B cell (primary cell): ENCODE measurements at regions of chr10 and their contacts with region 1.

Region 1: DNA sequence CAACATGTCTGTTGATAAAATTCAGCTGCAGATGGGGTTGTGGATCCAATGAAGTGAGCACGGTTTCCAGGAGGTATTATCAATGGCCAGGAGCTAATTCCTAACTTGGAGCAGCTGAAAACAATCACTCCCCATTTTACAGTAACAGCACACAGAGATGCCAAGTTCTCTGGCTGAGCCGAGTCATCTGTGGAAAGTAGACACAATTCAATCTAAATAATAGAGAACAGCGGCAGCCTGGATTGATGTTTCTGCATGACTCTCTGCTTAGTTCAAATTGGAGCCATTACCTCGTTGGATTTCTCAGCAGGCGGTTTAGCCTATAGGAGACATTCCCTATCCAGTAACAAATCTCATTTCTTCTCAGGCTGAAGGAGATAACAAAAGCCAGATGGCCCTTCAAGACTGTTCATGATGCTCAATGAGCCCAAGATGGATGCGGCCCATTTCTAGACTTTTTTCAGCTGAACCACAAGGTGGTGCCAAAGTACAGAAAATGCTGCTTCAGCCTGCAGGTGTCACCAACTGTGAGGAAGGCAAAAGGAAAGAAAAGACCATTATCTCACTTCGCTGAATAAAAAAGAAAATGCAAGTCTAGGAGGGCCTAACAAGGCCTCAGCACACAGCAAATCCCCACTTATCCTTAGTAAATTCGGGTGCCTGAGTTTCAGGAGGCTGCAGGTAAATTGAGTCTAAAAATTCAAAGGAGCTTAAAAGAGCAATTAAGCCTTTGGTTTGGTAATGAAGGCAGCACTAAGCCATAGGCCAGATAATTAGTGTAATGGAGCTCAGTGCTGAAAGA is 83.7 kb downstream of the SLC16A9 start:
- DNase-seq: peak; percentile 78
- ATAC-seq: peak; percentile 89
- H3K4me3 ChIP-seq: no peak overlapping the region
- H3K4me3 Mint-ChIP-seq: no peak overlapping the region
- H3K27ac ChIP-seq: no peak overlapping the region
- H3K27ac Mint-ChIP-seq: no peak overlapping the region
- H3K4me1 ChIP-seq: no peaks in the 10 kb centered on the region
- H3K4me1 Mint-ChIP-seq: peaks cover 3% of the 10 kb centered on the region
- H3K27me3 ChIP-seq: no peaks in the 10 kb centered on the region
- H3K27me3 Mint-ChIP-seq: no peaks in the 10 kb centered on the region
- CTCF ChIP-seq: peak; percentile 87

Region 2: GRCh38 chr10:59808896-59809643 is 183.1 kb after region 1 on chr10:
- CTCF ChIA-PET with region 1: interaction called, 33 read pairs
- POLR2A ChIA-PET with region 1: no interaction called
- intact Hi-C with region 1: loop called (anchors 1 kb)
- DNase-seq: peak; percentile 60
- ATAC-seq: peak; percentile 65
- H3K4me3 ChIP-seq: no peak overlapping the region
- H3K4me3 Mint-ChIP-seq: no peak overlapping the region
- H3K27ac ChIP-seq: no peak overlapping the region
- H3K27ac Mint-ChIP-seq: peak overlapping the region; percentile 16
- H3K4me1 ChIP-seq: peaks cover 0 to 5% of the 10 kb centered on the region in 2 donors
- H3K4me1 Mint-ChIP-seq: peaks cover 20% of the 10 kb centered on the region
- H3K27me3 ChIP-seq: no peaks in the 10 kb centered on the region
- H3K27me3 Mint-ChIP-seq: no peaks in the 10 kb centered on the region
- CTCF ChIP-seq: peak; percentile 69

Region 3: GRCh38 chr10:60032723-60033122 is 406.8 kb after region 1 on chr10:
- CTCF ChIA-PET with region 1: interaction called, 47 read pairs
- POLR2A ChIA-PET with region 1: no interaction called
- intact Hi-C with region 1: loop called (anchors 1 kb)
- DNase-seq: peak; percentile 67
- ATAC-seq: peak; percentile 36
- H3K4me3 ChIP-seq: no peak overlapping the region
- H3K4me3 Mint-ChIP-seq: no peak overlapping the region
- H3K27ac ChIP-seq: no peak overlapping the region
- H3K27ac Mint-ChIP-seq: no peak overlapping the region
- H3K4me1 ChIP-seq: peaks cover 6 to 7% of the 10 kb centered on the region in 2 donors
- H3K4me1 Mint-ChIP-seq: peaks cover 10% of the 10 kb centered on the region
- H3K27me3 ChIP-seq: no peaks in the 10 kb centered on the region
- H3K27me3 Mint-ChIP-seq: no peaks in the 10 kb centered on the region
- CTCF ChIP-seq: peak; percentile 67

Region 4: DNA sequence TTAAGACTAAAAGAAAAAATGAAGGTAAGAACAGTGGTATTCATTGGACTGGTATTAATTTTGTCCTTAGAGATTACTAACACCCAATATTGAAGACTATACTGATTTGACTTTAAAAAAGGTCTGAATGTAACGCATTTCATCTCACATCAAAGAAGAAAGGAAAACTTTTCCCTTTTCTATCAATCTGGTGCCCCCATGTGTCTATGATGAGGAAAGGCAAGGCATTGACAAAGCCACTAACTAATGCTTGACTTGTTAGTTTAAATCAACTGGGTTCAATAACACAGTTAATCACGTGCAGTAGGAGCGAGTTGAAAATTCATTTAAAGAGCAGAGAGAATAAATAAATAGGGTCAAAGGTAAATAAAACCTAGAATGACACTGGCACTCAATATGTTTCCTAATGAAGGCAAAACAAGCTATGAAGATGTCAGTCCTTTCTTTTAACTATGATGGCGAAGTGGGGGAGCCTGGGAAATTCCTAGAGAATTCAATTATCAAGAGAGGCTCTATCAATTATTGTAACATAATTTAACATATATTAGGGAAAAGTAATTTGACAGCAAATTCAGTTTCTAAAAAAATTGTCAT is 582.9 kb after region 1 on chr10:
- CTCF ChIA-PET with region 1: interaction called, 14 read pairs
- POLR2A ChIA-PET with region 1: no interaction called
- intact Hi-C with region 1: no loop called
- DNase-seq: peak; percentile 36
- ATAC-seq: no peak
- H3K4me3 ChIP-seq: no peak overlapping the region
- H3K4me3 Mint-ChIP-seq: no peak overlapping the region
- H3K27ac ChIP-seq: no peak overlapping the region
- H3K27ac Mint-ChIP-seq: no peak overlapping the region
- H3K4me1 ChIP-seq: peaks cover 14 to 26% of the 10 kb centered on the region in 2 donors
- H3K4me1 Mint-ChIP-seq: peaks cover 37% of the 10 kb centered on the region
- H3K27me3 ChIP-seq: no peaks in the 10 kb centered on the region
- H3K27me3 Mint-ChIP-seq: no peaks in the 10 kb centered on the region
- CTCF ChIP-seq: peak; percentile 67

Region 5: DNA sequence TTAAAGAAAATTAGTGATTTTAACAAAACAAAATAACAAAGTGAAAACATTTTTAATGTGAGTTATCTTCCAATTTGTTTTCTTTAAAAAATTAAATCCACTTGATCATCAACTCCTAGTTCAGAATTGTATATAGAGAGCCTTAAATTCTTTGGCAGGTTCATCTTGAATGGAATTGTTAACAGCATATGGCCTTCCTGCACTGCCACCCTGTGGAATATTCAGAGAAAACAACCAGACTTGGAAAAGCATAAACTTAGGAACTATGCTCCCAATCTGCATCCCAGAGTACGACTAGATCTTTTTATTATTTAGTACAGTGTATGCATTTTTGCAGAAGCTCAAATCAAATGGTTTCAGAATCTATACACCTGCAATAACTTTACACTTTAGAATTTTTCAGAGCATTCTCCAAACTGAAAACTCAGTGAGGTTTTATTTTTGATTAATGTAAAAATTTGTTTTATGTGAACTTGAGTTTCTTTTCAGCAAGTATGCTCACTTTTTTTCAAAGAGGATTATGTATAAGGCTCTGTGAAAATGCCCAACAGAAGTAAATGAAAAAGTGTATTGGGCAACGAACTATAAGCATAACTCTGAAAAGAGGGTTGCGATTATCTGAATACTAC is 808.6 kb after region 1 on chr10:
- CTCF ChIA-PET with region 1: interaction called, 5 read pairs
- POLR2A ChIA-PET with region 1: no interaction called
- intact Hi-C with region 1: loop called (anchors 2 kb)
- DNase-seq: peak; percentile 61
- ATAC-seq: peak; percentile 56
- H3K4me3 ChIP-seq: no peak overlapping the region
- H3K4me3 Mint-ChIP-seq: no peak overlapping the region
- H3K27ac ChIP-seq: no peak overlapping the region
- H3K27ac Mint-ChIP-seq: no peak overlapping the region
- H3K4me1 ChIP-seq: no peaks in the 10 kb centered on the region
- H3K4me1 Mint-ChIP-seq: peaks cover 7% of the 10 kb centered on the region
- H3K27me3 ChIP-seq: no peaks in the 10 kb centered on the region
- H3K27me3 Mint-ChIP-seq: no peaks in the 10 kb centered on the region
- CTCF ChIP-seq: peak; percentile 77

Region 6: DNA sequence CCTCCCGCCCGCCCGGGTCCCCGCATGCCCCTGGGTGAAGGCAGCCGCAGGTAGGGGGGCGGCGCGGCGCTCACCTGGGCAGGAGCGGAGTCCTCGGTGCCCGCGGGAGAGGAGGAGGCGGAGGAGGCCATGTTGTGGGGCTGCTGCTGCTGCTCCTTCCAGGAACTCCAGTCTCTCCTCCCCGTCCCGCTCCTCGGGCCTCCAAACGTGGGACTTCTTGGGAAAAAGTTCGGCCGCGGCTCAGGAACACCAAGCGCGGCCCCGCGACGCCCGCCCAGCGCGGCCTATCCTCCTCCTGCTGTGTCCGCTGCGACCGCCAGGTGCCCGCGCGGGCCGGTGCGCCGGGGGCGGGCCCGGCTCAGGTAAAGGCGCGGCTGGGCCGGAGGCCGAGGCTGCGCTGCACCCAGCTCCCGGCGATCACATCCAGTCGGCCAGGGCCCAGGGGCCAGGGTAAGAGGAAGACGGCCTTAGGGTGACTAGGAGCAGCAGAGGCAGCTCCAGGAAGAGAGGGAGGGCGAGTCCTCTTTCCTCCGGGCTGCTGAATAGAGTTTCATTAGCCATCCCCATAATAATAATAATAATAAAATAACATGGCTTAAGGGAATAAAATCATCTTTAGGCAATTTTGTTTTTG is 1107.4 kb after region 1 on chr10:
- CTCF ChIA-PET with region 1: no interaction called
- POLR2A ChIA-PET with region 1: no interaction called
- intact Hi-C with region 1: loop called (anchors 1 kb)
- DNase-seq: peak; percentile 70
- ATAC-seq: peak; percentile 83
- H3K4me3 ChIP-seq: peak overlapping the region in 4 of 5 experiments; percentile 57 to 83 (median 71)
- H3K4me3 Mint-ChIP-seq: peak overlapping the region; percentile 76
- H3K27ac ChIP-seq: peak overlapping the region in 1 of 2 donors; percentile 71
- H3K27ac Mint-ChIP-seq: peak overlapping the region; percentile 72
- H3K4me1 ChIP-seq: peaks cover 21% of the 10 kb centered on the region in 2 donors
- H3K4me1 Mint-ChIP-seq: peaks cover 30% of the 10 kb centered on the region
- H3K27me3 ChIP-seq: peaks cover 0 to 21% (median 9%) of the 10 kb centered on the region in 4 experiments
- H3K27me3 Mint-ChIP-seq: no peaks in the 10 kb centered on the region
- CTCF ChIP-seq: peak; percentile 68